Activated CD4-positive, alpha-beta T cell treated with anti-CD3 and anti-CD28 coated beads, Interleukin-2, amount 10 ng/mL, durations not matched to agents 24 days and 14 days (primary cell): ENCODE measurements at regions of chr16 and their contacts with region 1.

Region 1: DNA sequence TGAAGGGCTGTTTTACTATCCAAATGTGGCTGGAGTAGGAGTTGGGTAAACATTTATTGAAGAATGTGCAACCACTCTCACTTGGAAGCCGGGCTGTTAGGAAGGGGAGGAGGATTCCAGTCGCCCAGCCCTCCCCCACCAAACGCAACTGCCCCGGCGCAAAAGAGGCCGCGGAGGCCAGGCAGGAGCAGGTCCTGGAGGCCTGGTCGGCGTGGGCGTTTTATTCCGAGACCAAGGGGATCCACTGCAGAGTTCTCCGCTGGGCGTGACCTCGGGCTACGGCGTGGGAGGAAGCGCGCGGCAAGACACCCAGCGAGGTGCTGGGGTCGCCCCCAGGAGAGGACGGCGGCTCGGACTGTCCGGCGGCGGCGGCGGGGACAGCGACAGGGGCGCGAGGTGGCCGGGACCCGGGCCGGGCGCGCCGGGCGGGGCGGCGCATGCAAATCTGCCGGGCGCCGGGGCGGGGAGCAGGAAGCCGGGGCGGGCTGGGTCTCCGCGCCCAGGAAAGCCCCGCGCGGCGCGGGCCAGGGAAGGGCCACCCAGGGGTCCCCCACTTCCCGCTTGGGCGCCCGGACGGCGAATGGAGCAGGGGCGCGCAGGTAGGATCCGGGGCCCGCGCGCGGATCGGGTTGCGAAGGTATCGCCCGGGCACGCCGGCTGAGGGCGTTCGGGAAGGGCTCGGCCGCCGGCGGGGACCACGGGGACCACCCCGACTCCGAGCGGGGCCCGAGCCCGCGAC is at the start of gene IL4R:
- DNase-seq: peak; percentile 93
- H3K4me3 Mint-ChIP-seq: peak within 1 kb of the TSS; percentile 100
- H3K27ac Mint-ChIP-seq: peak within 1 kb of the TSS; percentile 96
- H3K4me1 Mint-ChIP-seq: peaks cover 48% of the 10 kb centered on the region
- H3K27me3 Mint-ChIP-seq: no peaks in the 10 kb centered on the region
- total RNA-seq, gene IL4R: 345 and 375 TPM in 2 replicates

Region 2: GRCh38 chr16:27179500-27180072 is 134.0 kb before region 1 on chr16:
- intact Hi-C with region 1: loop called (anchors 1 kb)
- DNase-seq: peak; percentile 96
- H3K4me3 Mint-ChIP-seq: peak overlapping the region; percentile 3
- H3K27ac Mint-ChIP-seq: peak overlapping the region; percentile 73
- H3K4me1 Mint-ChIP-seq: peaks cover 38% of the 10 kb centered on the region
- H3K27me3 Mint-ChIP-seq: peaks cover 3% of the 10 kb centered on the region